ENCODE measurements at regions of chr3 and their contacts with region 1.

Region 1: GRCh38 chr3:171654809-171655208 is 155.5 kb downstream of the PLD1 start:
- DNase-seq: peak; percentile 75 to 88
- H3K4me3 ChIP-seq: no peak overlapping the region
- CTCF ChIP-seq: no peak
- POLR2A ChIP-seq: no peak

Region 2: GRCh38 chr3:171736556-171736955 is 81.7 kb after region 1 on chr3:
- intact Hi-C with region 1: no loop called
- DNase-seq: no peak
- H3K4me3 ChIP-seq: no peak overlapping the region
- CTCF ChIP-seq: no peak
- POLR2A ChIP-seq: no peak

Region 3: GRCh38 chr3:171829841-171830517 is 175.2 kb after region 1 on chr3:
- intact Hi-C with region 1: loop called (anchors 10 kb)
- DNase-seq: peak in 1 of 2 donors; percentile 90
- H3K4me3 ChIP-seq: no peak overlapping the region
- CTCF ChIP-seq: no peak
- POLR2A ChIP-seq: no peak

Region 4: DNA sequence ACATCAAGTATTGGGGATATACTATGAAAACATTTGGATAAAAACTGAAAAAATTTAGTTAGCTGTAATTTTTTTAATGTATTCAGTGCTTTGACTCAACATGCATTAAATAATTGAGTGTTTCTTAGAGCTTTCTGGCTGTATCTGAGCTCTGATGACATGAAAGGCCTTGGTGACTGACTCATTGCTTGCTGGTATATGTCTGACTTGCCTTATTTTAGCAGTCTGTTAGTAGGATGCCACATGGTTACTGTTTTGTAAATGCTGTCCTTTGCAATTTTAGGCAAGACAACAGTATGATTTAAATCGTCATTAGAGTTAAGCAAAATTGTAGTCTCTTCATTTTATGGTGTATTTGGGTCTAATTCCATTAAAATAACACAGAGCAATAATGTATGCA is 594.2 kb after region 1 on chr3:
- intact Hi-C with region 1: no loop called
- DNase-seq: no peak
- H3K4me3 ChIP-seq: no peak overlapping the region
- CTCF ChIP-seq: no peak
- POLR2A ChIP-seq: no peak

Region 5: DNA sequence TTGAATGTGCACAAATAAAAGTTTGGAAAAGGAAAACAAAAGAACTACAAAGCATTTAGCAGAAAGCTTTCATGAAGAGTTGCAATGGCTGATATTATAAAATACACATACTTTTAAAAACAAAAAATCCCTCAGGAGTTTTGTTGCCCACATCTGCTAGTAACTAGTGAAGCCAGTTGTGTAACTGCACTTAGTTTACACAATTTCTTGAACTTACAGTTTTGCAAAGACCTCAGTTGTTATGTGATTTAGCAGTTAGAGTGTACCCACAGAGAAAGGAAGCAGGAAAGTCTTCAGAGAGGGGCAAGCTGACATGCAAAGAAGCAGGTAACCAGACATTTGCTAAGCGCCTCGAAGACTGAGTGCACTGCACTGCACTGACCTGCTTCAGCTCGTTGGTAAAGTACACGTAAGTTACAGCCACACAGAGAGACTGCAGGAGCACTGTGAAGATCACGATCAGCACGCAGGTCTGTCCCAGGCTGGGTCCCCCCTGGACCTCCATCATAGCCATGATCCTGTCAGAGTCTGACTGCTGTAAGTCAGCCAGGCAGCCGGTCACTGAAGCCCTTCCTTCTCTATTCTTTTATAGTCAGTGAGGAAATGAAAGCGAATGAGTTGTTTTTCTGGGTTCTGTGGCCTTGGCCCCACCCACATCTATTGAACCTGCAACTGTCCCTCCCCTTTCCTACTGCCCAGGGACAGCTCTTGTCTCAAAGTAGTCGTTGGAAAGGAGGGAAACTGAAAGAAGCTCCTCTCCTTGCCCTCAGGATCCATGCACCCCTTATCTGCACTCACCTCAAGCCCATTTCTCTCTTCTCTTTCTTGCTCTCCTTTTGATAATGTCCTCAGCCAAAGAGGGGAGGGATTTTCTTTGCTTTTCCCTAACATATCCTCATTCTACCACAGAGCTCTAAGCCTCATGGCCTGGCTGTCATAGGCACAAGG is 868.3 kb after region 1 on chr3 and contains the start of gene TNFSF10:
- intact Hi-C with region 1: no loop called
- DNase-seq: peak; percentile 73 to 90
- H3K4me3 ChIP-seq: peak within 1 kb of the TSS; percentile 5
- CTCF ChIP-seq: no peak
- POLR2A ChIP-seq: peak in 1 of 2 donors; percentile 4
- total RNA-seq, gene TNFSF10: 57.5 to 75.2 (median 68.4) TPM

Measured in lower leg skin (tissue), 4 donors.